Breast epithelium (tissue), 4 donors: ENCODE measurements at regions of chr5 and their contacts with region 1.

Region 1: GRCh38 chr5:177554474-177555111 is at the start of gene FAM193B:
- DNase-seq: peak; percentile 88 to 96
- H3K4me3 ChIP-seq: peak within 1 kb of the TSS; percentile 90 to 93 (median 90)
- H3K27ac ChIP-seq: peak within 1 kb of the TSS; percentile 81 to 95
- H3K4me1 ChIP-seq: no peaks in the 10 kb centered on the region
- H3K27me3 ChIP-seq: no peaks in the 10 kb centered on the region
- CTCF ChIP-seq: peak in 1 of 3 donors; percentile 24
- POLR2A ChIP-seq: no peak
- total RNA-seq, gene FAM193B: 35.4 to 81.5 (median 77.0) TPM

Region 2: GRCh38 chr5:177620560-177620959 is 66.0 kb after region 1 on chr5:
- intact Hi-C with region 1: no loop called
- DNase-seq: no peak
- H3K4me3 ChIP-seq: no peak overlapping the region
- H3K27ac ChIP-seq: no peak overlapping the region
- H3K4me1 ChIP-seq: no peaks in the 10 kb centered on the region
- H3K27me3 ChIP-seq: no peaks in the 10 kb centered on the region
- CTCF ChIP-seq: no peak
- POLR2A ChIP-seq: no peak

Region 3: GRCh38 chr5:178532666-178533065 is 978.1 kb after region 1 on chr5:
- intact Hi-C with region 1: loop called (anchors 5 kb)
- DNase-seq: no peak
- H3K4me3 ChIP-seq: no peak overlapping the region
- H3K27ac ChIP-seq: no peak overlapping the region
- H3K4me1 ChIP-seq: no peaks in the 10 kb centered on the region
- H3K27me3 ChIP-seq: no peaks in the 10 kb centered on the region
- CTCF ChIP-seq: no peak
- POLR2A ChIP-seq: no peak